Mammary epithelial cell (primary cell): ENCODE measurements at regions of chr4 and their contacts with region 1.

Region 1: DNA sequence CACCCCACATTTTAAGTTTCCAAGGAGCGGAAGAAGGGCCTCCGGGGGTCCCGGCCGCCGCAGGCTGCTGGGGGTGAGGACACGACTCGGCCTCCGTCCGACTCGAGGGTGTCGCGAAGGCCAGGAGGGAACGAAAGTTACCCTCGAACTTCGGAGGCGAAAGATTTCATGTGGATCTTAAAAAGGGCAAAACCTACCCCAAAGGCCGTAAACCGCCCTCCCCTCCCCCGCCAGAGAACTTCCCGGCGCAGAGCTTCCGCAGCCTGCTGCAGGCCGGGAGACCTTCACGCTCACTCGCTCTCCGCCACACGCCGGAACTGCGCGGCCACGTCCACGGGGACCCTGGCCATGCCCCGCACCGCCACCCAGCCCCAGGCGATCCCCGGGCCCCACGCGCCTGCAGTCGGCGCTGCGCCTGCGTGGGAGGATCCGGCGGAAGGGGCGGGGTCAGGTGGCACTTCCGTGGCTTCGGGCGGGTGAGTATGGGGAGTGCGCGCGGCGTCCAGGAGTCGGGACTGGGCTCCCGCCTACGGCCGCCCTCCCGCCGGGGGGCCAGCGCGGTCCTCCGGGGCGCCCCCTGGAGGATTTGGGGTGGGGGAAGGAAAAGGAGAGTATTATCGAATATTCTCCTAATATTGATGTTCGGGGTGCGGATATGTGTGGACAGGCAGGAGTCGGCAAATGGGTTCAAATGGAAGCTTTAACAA is at the start of gene MMAA:
- DNase-seq: peak; percentile 87
- H3K4me3 ChIP-seq: peak within 1 kb of the TSS; percentile 71 to 100 (median 96)
- H3K27ac ChIP-seq: peak within 1 kb of the TSS; percentile 98
- H3K4me1 ChIP-seq: peaks cover 19% of the 10 kb centered on the region
- H3K27me3 ChIP-seq: no peaks in the 10 kb centered on the region
- CTCF ChIP-seq: peak; percentile 25 to 55
- total RNA-seq, gene MMAA: 5.3 to 8.4 TPM

Region 2: GRCh38 chr4:145216535-145216934 is 402.6 kb before region 1 on chr4:
- CTCF ChIA-PET with region 1: interaction called, 3 read pairs
- dilution Hi-C with region 1: no loop called
- in situ Hi-C with region 1: no loop called
- intact Hi-C with region 1: loop called (anchors 5 kb)
- DNase-seq: peak; percentile 23
- H3K4me3 ChIP-seq: no peak overlapping the region
- H3K27ac ChIP-seq: no peak overlapping the region
- H3K4me1 ChIP-seq: no peaks in the 10 kb centered on the region
- H3K27me3 ChIP-seq: no peaks in the 10 kb centered on the region
- CTCF ChIP-seq: peak; percentile 53 to 67

Region 3: DNA sequence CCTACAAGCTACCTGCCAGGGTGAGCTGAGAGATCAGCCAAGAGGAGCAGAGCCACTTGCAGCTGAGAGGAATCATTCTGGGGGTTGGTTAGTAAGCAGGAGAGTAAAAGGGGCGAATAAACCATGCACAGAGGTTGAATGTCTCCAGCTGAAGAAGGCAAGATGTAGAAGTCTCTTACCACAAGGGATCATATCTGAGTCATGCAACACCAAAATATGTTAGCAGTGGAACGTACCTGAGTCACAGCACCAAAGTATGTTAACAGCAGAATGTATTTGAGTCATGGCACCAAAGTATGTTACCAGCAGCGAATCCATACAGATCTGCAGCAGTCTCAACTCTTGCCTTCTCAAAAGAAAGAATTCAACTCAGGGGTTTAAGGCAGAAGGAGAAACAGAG is 90.8 kb after region 1 on chr4:
- CTCF ChIA-PET with region 1: no interaction called
- dilution Hi-C with region 1: loop called (anchors 5 kb)
- in situ Hi-C with region 1: no loop called
- intact Hi-C with region 1: no loop called
- DNase-seq: peak; percentile 90
- H3K4me3 ChIP-seq: no peak overlapping the region
- H3K27ac ChIP-seq: no peak overlapping the region
- H3K4me1 ChIP-seq: peaks cover 18% of the 10 kb centered on the region
- H3K27me3 ChIP-seq: no peaks in the 10 kb centered on the region
- CTCF ChIP-seq: no peak

Region 4: DNA sequence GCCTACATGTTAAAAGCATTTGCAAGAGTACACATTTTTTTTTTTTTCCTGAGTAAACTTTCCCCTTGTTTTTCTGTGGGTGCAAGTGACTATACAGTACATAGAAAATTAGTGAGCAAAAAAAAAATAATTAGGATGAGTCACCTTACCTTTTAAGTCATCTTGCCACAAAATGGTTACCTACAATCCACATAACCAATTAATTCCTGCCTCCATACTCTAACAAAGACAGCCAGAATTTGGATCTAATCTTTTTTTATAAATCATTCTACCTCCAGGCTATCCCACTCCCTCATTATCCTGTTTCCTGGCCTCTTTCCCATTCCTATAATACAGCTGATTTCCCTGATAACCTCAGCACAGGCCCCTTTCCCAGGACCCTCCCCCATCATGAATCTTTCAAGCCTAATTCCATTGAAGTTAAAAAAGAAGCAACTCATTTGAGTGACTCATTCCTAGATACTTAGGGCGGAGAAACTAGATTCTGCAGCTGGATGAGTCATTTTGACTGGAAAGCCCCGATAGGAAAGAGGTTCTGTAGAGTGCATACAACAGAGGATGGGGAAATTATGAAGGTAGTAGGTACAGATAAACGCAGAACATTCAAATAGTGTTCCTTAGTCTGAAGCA is 189.1 kb after region 1 on chr4:
- CTCF ChIA-PET with region 1: no interaction called
- dilution Hi-C with region 1: no loop called
- in situ Hi-C with region 1: no loop called
- intact Hi-C with region 1: loop called (anchors 1 kb)
- DNase-seq: peak; percentile 99
- H3K4me3 ChIP-seq: peak overlapping the region in 1 of 3 experiments; percentile 21
- H3K27ac ChIP-seq: peak overlapping the region; percentile 98
- H3K4me1 ChIP-seq: peaks cover 48% of the 10 kb centered on the region
- H3K27me3 ChIP-seq: no peaks in the 10 kb centered on the region
- CTCF ChIP-seq: no peak

Region 5: GRCh38 chr4:145936142-145936996 is 317.3 kb after region 1 on chr4:
- CTCF ChIA-PET with region 1: no interaction called
- dilution Hi-C with region 1: no loop called
- in situ Hi-C with region 1: no loop called
- intact Hi-C with region 1: loop called (anchors 5 kb)
- DNase-seq: peak; percentile 67
- H3K4me3 ChIP-seq: peak overlapping the region; percentile 84 to 91 (median 85)
- H3K27ac ChIP-seq: peak overlapping the region; percentile 74
- H3K4me1 ChIP-seq: peaks cover 20% of the 10 kb centered on the region
- H3K27me3 ChIP-seq: no peaks in the 10 kb centered on the region
- CTCF ChIP-seq: peak in 1 of 2 donors; percentile 40

Region 6: DNA sequence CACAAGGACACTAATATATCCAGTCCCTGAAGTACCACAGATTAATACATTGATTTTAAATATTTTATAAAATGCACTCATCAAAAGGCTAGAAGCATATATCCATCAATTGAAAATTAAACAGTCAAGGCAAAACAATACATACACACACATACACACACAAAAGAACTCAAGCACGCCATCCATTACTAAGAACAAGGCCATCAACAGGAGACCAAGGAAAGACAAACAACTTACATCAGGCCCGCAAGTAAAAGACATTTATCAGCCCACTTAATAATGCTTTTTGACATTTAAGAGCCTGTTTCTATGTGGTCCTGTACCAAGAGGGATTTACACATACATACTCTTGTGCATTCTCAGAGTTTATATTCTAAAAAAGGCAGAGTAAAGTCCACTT is 369.5 kb after region 1 on chr4:
- CTCF ChIA-PET with region 1: no interaction called
- dilution Hi-C with region 1: no loop called
- in situ Hi-C with region 1: no loop called
- intact Hi-C with region 1: no loop called
- DNase-seq: no peak
- H3K4me3 ChIP-seq: no peak overlapping the region
- H3K27ac ChIP-seq: no peak overlapping the region
- H3K4me1 ChIP-seq: no peaks in the 10 kb centered on the region
- H3K27me3 ChIP-seq: peaks cover 2% of the 10 kb centered on the region
- CTCF ChIP-seq: no peak